ENCODE measurements at regions of chr22 and their contacts with region 1.

Region 1: GRCh38 chr22:26461188-26461810 is 22.3 kb downstream of the HPS4 start:
- DNase-seq: peak in 12 of 14 experiments; percentile 10 to 65 (median 24)
- ATAC-seq: no peak
- H3K4me3 ChIP-seq: no peak overlapping the region
- H3K4me3 Mint-ChIP-seq: no peak overlapping the region
- H3K27ac ChIP-seq: no peak overlapping the region
- H3K27ac Mint-ChIP-seq: no peak overlapping the region
- H3K4me1 ChIP-seq: no peaks in the 10 kb centered on the region
- H3K4me1 Mint-ChIP-seq: peaks cover 6% of the 10 kb centered on the region
- H3K27me3 ChIP-seq: no peaks in the 10 kb centered on the region
- H3K27me3 Mint-ChIP-seq: no peaks in the 10 kb centered on the region
- CTCF ChIP-seq: peak; percentile 83

Region 2: GRCh38 chr22:26364066-26365015 is 97.0 kb before region 1 on chr22:
- CTCF ChIA-PET with region 1: interaction called, 15 read pairs
- POLR2A ChIA-PET with region 1: no interaction called
- intact Hi-C with region 1: loop called (anchors 1 kb)
- DNase-seq: peak; percentile 18 to 80 (median 34)
- ATAC-seq: peak; percentile 81
- H3K4me3 ChIP-seq: no peak overlapping the region
- H3K4me3 Mint-ChIP-seq: no peak overlapping the region
- H3K27ac ChIP-seq: no peak overlapping the region
- H3K27ac Mint-ChIP-seq: no peak overlapping the region
- H3K4me1 ChIP-seq: peaks cover 8% of the 10 kb centered on the region
- H3K4me1 Mint-ChIP-seq: peaks cover 6% of the 10 kb centered on the region
- H3K27me3 ChIP-seq: peaks cover 0 to 11% of the 10 kb centered on the region in 2 experiments
- H3K27me3 Mint-ChIP-seq: peaks cover 31% of the 10 kb centered on the region
- CTCF ChIP-seq: peak; percentile 60

Region 3: DNA sequence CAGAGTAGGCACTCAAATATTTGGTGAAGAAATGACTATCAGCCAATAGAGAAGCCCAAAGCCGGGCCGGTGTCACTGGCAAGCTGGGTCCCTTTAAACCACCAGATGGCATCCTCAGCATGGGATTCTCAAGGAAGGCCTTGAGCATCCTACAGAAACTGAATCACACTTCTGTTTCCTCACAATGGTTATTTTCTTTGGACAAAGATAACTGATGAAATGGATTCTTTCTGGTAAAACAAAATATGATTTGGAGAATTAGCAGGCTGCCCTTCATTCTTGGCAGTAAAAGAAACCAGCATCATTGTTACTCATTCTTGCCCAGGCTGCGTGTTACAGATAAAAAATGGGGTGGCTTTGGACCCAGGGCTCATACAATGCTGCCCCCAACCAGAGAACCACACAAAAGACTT is 62.6 kb before region 1 on chr22:
- CTCF ChIA-PET with region 1: interaction called, 3 read pairs
- POLR2A ChIA-PET with region 1: no interaction called
- intact Hi-C with region 1: loop called (anchors 1 kb)
- DNase-seq: peak; percentile 13 to 76 (median 34)
- ATAC-seq: peak; percentile 77
- H3K4me3 ChIP-seq: no peak overlapping the region
- H3K4me3 Mint-ChIP-seq: no peak overlapping the region
- H3K27ac ChIP-seq: no peak overlapping the region
- H3K27ac Mint-ChIP-seq: no peak overlapping the region
- H3K4me1 ChIP-seq: no peaks in the 10 kb centered on the region
- H3K4me1 Mint-ChIP-seq: no peaks in the 10 kb centered on the region
- H3K27me3 ChIP-seq: peaks cover 0 to 3% of the 10 kb centered on the region in 2 experiments
- H3K27me3 Mint-ChIP-seq: no peaks in the 10 kb centered on the region
- CTCF ChIP-seq: peak; percentile 68

Measured in CD4-positive, alpha-beta T cell (primary cell).